Activated CD8-positive, alpha-beta T cell treated with anti-CD3 and anti-CD28 coated beads, Interleukin-2, amount 10 ng/mL, durations not matched to agents 7 days and 5 days (primary cell): ENCODE measurements at regions of chr6 and their contacts with region 1.

Region 1: GRCh38 chr6:138115877-138116660 is 8.8 kb upstream of the PERP start:
- DNase-seq: peak; percentile 58
- ATAC-seq: peak; percentile 83
- H3K4me3 Mint-ChIP-seq: no peak overlapping the region
- H3K27ac Mint-ChIP-seq: no peak overlapping the region
- H3K4me1 Mint-ChIP-seq: peaks cover 6% of the 10 kb centered on the region
- H3K27me3 Mint-ChIP-seq: peaks cover 49% of the 10 kb centered on the region

Region 2: GRCh38 chr6:138099832-138100231 is 16.2 kb before region 1 on chr6:
- CTCF ChIA-PET with region 1: interaction called, 22 read pairs
- POLR2A ChIA-PET with region 1: no interaction called
- DNase-seq: no peak
- ATAC-seq: no peak
- H3K4me3 Mint-ChIP-seq: no peak overlapping the region
- H3K27ac Mint-ChIP-seq: no peak overlapping the region
- H3K4me1 Mint-ChIP-seq: no peaks in the 10 kb centered on the region
- H3K27me3 Mint-ChIP-seq: peaks cover 19% of the 10 kb centered on the region

Region 3: DNA sequence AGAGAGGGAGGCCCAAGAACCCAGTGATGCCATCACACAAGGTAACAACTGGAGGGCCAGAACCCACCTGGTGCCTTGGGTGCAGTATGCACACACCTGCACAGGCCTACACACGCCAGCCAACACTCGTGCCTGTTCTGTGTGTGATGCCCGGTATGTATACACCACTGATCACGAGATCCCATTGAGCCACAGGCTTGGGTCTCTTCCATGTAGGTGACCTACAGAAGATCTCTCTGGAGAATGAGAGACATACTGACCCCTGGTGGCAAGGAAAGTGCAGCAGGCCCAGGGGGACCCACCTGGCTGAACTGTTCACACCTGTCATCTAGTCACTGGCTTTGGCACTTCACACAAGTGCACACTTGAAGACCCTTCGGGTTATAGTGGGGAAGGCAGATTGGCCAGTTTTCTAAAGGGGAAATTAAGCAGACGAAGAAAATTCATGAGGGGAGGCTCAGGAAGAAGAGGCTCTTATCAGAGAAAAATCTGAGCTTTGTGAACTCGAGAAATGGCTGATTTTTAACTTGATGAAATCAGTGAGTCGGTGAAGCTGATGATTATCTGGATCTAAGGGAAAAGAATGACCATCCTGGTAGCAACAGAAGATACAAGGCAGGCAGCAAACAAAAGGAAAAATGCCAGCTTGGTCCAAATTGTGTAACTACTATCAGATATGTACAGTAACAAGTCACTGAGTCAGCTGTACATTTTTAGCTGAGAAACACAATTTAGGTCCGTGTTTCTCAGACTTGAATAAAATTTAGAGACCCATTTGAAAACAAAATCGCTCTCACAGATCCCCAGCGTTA is 171.3 kb after region 1 on chr6:
- CTCF ChIA-PET with region 1: interaction called, 57 read pairs
- POLR2A ChIA-PET with region 1: no interaction called
- DNase-seq: peak; percentile 57
- ATAC-seq: peak; percentile 73
- H3K4me3 Mint-ChIP-seq: no peak overlapping the region
- H3K27ac Mint-ChIP-seq: no peak overlapping the region
- H3K4me1 Mint-ChIP-seq: peaks cover 4% of the 10 kb centered on the region
- H3K27me3 Mint-ChIP-seq: no peaks in the 10 kb centered on the region

Region 4: DNA sequence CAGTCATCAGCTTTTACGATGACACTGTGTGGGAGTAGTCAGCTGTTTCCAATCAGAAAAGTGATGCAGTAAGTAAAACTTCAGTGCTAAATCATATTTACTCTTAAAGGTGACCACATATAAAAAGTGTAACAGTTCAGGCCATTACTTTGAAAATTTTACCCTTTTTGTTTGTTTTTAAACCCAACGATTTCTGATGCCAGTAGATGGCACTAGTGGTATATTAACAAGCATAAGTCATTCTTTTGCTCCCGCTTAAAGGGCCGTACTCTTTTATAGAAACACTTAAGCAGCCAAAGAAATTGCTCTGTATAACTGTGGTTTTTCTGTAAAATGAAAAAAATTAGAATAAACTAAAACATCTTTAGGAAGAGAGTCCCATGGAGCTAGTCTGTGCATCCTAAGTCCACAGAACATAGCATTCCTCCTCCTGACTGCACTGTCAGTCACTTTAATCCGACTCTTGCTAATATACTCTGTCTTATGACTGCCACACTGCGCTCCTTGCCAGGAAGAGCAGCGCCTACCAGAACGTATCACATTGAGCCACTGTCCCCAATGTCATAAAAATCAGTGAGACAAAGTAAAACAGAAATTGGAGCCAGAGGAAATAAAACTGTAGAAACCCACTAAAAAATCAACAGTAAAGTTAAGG is 313.0 kb after region 1 on chr6:
- CTCF ChIA-PET with region 1: interaction called, 15 read pairs
- POLR2A ChIA-PET with region 1: no interaction called
- DNase-seq: peak; percentile 34
- ATAC-seq: peak; percentile 58
- H3K4me3 Mint-ChIP-seq: no peak overlapping the region
- H3K27ac Mint-ChIP-seq: no peak overlapping the region
- H3K4me1 Mint-ChIP-seq: peaks cover 2% of the 10 kb centered on the region
- H3K27me3 Mint-ChIP-seq: no peaks in the 10 kb centered on the region